T-cell (primary cell): ENCODE measurements at regions of chrX and their contacts with region 1.

Region 1: DNA sequence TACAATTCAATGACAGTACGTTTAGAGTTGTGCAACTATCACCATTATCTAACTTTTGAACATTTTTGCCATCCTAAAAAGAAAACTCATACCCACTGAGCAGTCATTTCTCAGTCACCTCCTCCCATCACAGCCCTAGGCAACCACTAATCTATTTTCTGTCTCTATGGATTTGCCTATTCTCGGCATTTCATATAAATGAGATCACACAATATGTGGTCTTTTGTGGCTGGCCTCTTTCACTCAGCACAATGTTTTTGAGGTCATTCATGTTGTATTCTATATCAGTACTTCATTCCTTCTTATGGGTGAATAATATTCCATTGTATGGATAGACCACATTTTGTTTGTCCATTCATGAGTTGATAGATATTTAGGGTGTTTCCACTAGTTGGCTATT is 103.0 kb downstream of the PPEF1 start:
- DNase-seq: no peak
- ATAC-seq: no peak
- H3K4me3 ChIP-seq: no peak overlapping the region
- H3K4me3 Mint-ChIP-seq: no peak overlapping the region
- H3K27ac ChIP-seq: no peak overlapping the region
- H3K27ac Mint-ChIP-seq: no peak overlapping the region
- H3K4me1 ChIP-seq: no peaks in the 10 kb centered on the region
- H3K4me1 Mint-ChIP-seq: no peaks in the 10 kb centered on the region
- H3K27me3 ChIP-seq: no peaks in the 10 kb centered on the region
- H3K27me3 Mint-ChIP-seq: peaks cover 0 to 3% of the 10 kb centered on the region in 2 donors

Region 2: GRCh38 chrX:18789916-18790315 is 20.5 kb before region 1 on chrX:
- CTCF ChIA-PET with region 1: no interaction called
- POLR2A ChIA-PET with region 1: no interaction called
- DNase-seq: no peak
- ATAC-seq: no peak
- H3K4me3 ChIP-seq: no peak overlapping the region
- H3K4me3 Mint-ChIP-seq: no peak overlapping the region
- H3K27ac ChIP-seq: no peak overlapping the region
- H3K27ac Mint-ChIP-seq: no peak overlapping the region
- H3K4me1 ChIP-seq: no peaks in the 10 kb centered on the region
- H3K4me1 Mint-ChIP-seq: no peaks in the 10 kb centered on the region
- H3K27me3 ChIP-seq: no peaks in the 10 kb centered on the region
- H3K27me3 Mint-ChIP-seq: no peaks in the 10 kb centered on the region

Region 3: DNA sequence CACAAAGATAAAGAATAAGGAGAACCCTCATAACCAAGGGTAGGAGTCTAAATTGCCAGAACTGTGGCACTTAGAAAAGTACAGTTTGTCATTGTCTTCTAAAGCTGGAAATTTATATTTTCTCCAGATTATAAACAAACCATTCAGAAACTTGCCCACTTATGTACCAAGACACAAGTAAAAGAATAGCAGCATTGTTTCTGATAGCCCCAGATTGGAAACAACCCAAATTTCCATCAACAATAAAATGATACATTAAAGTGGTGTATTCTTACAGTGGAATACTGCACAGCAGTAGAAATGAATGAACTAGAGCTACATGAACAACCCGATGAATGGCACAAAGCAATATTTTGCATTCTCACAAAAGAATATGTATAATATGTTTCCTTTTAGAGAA is 470.2 kb after region 1 on chrX:
- CTCF ChIA-PET with region 1: interaction called in 1 of 2 experiments, 11 read pairs
- POLR2A ChIA-PET with region 1: no interaction called
- DNase-seq: no peak
- ATAC-seq: no peak
- H3K4me3 ChIP-seq: no peak overlapping the region
- H3K4me3 Mint-ChIP-seq: no peak overlapping the region
- H3K27ac ChIP-seq: no peak overlapping the region
- H3K27ac Mint-ChIP-seq: no peak overlapping the region
- H3K4me1 ChIP-seq: no peaks in the 10 kb centered on the region
- H3K4me1 Mint-ChIP-seq: no peaks in the 10 kb centered on the region
- H3K27me3 ChIP-seq: no peaks in the 10 kb centered on the region
- H3K27me3 Mint-ChIP-seq: peaks cover 6 to 15% of the 10 kb centered on the region in 2 donors